ENCODE measurements at regions of chr10 and their contacts with region 1.

Region 1: GRCh38 chr10:64112701-64113355 is 591.6 kb downstream of the REEP3 start:
- DNase-seq: no peak
- ATAC-seq: peak; percentile 17
- H3K4me3 ChIP-seq: peak overlapping the region in 2 of 5 experiments; percentile 24 to 25
- H3K4me3 Mint-ChIP-seq: peak overlapping the region; percentile 71
- H3K27ac ChIP-seq: no peak overlapping the region
- H3K27ac Mint-ChIP-seq: no peak overlapping the region
- H3K4me1 ChIP-seq: peaks cover 0 to 6% of the 10 kb centered on the region in 2 donors
- H3K4me1 Mint-ChIP-seq: peaks cover 13% of the 10 kb centered on the region
- H3K27me3 ChIP-seq: no peaks in the 10 kb centered on the region
- H3K27me3 Mint-ChIP-seq: peaks cover 4% of the 10 kb centered on the region
- CTCF ChIP-seq: no peak

Region 2: DNA sequence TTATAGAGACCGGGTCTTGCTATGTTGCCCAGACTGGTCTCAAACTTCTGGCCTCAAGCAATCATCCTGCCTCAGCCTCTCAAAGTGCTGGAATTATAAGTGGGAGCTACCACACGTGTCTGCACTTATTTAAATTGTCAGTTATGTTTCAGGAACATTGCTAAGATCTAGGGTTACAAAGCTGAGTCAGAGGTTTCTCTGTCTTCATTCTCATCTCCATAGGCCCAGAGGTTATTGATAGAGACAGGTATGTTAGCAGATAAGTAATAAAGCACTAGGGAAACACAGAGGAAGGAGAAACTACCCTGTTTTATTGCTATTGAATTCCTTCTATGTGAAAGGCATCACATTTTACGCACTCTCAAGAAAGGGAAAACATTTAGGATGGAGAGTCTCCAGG is 377.5 kb before region 1 on chr10:
- CTCF ChIA-PET with region 1: no interaction called
- POLR2A ChIA-PET with region 1: no interaction called
- intact Hi-C with region 1: no loop called
- DNase-seq: no peak
- ATAC-seq: no peak
- H3K4me3 ChIP-seq: no peak overlapping the region
- H3K4me3 Mint-ChIP-seq: no peak overlapping the region
- H3K27ac ChIP-seq: no peak overlapping the region
- H3K27ac Mint-ChIP-seq: no peak overlapping the region
- H3K4me1 ChIP-seq: no peaks in the 10 kb centered on the region
- H3K4me1 Mint-ChIP-seq: no peaks in the 10 kb centered on the region
- H3K27me3 ChIP-seq: no peaks in the 10 kb centered on the region
- H3K27me3 Mint-ChIP-seq: peaks cover 2% of the 10 kb centered on the region
- CTCF ChIP-seq: no peak

Region 3: GRCh38 chr10:63910806-63911205 is 202.0 kb before region 1 on chr10:
- CTCF ChIA-PET with region 1: no interaction called
- POLR2A ChIA-PET with region 1: no interaction called
- intact Hi-C with region 1: no loop called
- DNase-seq: no peak
- ATAC-seq: no peak
- H3K4me3 ChIP-seq: no peak overlapping the region
- H3K4me3 Mint-ChIP-seq: no peak overlapping the region
- H3K27ac ChIP-seq: no peak overlapping the region
- H3K27ac Mint-ChIP-seq: no peak overlapping the region
- H3K4me1 ChIP-seq: no peaks in the 10 kb centered on the region
- H3K4me1 Mint-ChIP-seq: no peaks in the 10 kb centered on the region
- H3K27me3 ChIP-seq: peaks cover 0 to 2% (median 0%) of the 10 kb centered on the region in 4 experiments
- H3K27me3 Mint-ChIP-seq: peaks cover 17% of the 10 kb centered on the region
- CTCF ChIP-seq: no peak

Region 4: GRCh38 chr10:64142395-64142794 is 29.6 kb after region 1 on chr10:
- CTCF ChIA-PET with region 1: no interaction called
- POLR2A ChIA-PET with region 1: no interaction called
- intact Hi-C with region 1: loop called (anchors 1 kb)
- DNase-seq: no peak
- ATAC-seq: no peak
- H3K4me3 ChIP-seq: no peak overlapping the region
- H3K4me3 Mint-ChIP-seq: no peak overlapping the region
- H3K27ac ChIP-seq: no peak overlapping the region
- H3K27ac Mint-ChIP-seq: no peak overlapping the region
- H3K4me1 ChIP-seq: no peaks in the 10 kb centered on the region
- H3K4me1 Mint-ChIP-seq: no peaks in the 10 kb centered on the region
- H3K27me3 ChIP-seq: no peaks in the 10 kb centered on the region
- H3K27me3 Mint-ChIP-seq: no peaks in the 10 kb centered on the region
- CTCF ChIP-seq: no peak

Measured in B cell (primary cell).